WTC11 (cell line): ENCODE measurements at regions of chr5 and their contacts with region 1.

Region 1: DNA sequence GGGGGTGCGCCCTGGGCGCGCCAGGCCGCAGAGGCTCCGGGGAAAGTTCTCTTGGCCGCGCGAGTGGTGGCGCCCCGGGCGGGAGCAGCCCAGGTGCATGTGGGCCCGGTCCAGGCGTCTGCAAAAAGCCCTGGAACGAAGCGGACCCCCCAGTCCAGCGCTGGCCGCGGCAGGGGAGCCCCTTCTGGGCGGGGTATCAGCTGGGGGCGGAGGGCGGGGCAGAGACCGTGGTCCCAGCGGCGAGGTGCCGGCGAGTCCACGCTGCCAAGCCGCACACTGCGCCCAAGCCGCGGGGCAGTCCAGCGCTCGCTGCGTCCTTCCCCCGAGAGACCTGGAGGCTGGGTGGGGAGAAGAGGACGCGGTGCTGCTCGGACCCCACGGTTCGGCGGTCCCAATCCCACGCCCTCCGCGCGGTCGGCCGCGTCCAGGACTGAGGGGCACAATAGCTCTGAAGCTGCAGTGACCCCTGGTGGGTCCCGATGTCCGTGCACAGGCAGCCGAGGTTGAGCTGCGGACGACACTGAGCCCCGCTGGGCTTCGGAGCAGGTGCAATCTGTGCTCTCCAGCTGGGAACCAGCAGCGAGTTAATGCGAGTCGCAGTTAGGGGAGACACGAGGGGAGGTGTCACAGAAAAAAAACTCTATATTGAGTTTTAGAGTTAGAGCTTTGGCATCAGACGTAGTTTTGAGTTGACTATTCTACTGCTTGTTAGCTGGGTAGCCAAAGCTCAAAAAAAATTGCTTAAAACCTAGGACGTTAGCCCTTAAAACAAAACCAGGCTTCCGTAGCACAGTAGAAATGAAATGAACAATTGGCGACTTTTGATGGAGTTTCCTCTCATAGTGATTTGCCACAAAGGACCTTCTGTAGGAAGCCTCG is 1.1 kb upstream of the EPB41L4A start:
- DNase-seq: peak; percentile 90
- ATAC-seq: peak; percentile 85
- H3K4me3 Mint-ChIP-seq: peak overlapping the region; percentile 80
- H3K27ac Mint-ChIP-seq: no peak overlapping the region
- H3K4me1 Mint-ChIP-seq: peaks cover 21% of the 10 kb centered on the region
- H3K27me3 Mint-ChIP-seq: peaks cover 47% of the 10 kb centered on the region
- CTCF ChIP-seq: peak; percentile 77

Region 2: GRCh38 chr5:112160652-112161391 is 259.4 kb before region 1 on chr5:
- CTCF ChIA-PET with region 1: interaction called, 36 read pairs
- POLR2A ChIA-PET with region 1: interaction called, 11 read pairs
- DNase-seq: peak; percentile 88
- ATAC-seq: peak; percentile 86
- H3K4me3 Mint-ChIP-seq: peak overlapping the region; percentile 91
- H3K27ac Mint-ChIP-seq: peak overlapping the region; percentile 95
- H3K4me1 Mint-ChIP-seq: peaks cover 49% of the 10 kb centered on the region
- H3K27me3 Mint-ChIP-seq: no peaks in the 10 kb centered on the region; the same call in 1 of the 2 replicates
- CTCF ChIP-seq: peak; percentile 88

Region 3: DNA sequence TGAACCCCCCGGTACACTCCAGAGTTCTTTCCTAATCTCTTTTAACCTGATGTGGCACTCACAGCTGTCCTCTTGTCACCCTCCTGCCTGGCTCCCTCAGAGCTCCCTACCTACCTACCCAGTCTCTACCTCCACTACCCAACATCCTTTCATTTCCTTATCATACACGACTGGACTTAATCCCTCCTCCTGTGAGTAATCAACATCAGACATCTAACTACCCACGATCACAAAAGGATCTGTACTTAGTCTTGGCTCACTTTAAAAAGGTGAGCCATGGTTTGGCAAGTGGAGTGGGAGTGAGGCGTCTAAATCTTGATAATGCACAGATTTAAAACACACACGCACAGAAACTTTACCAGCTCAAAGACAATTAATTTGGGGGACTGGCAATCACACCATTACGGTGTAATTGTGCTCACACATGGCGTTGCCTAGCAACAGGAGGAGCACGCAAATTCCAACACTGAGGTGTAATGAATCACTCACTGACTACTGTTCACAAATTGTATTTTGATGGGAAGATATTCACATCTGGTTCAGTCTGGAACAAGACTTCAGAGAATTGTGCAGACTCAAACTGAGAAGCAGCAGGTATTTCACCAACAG is 237.0 kb before region 1 on chr5:
- CTCF ChIA-PET with region 1: interaction called, 10 read pairs
- POLR2A ChIA-PET with region 1: no interaction called
- DNase-seq: no peak
- ATAC-seq: peak; percentile 58
- H3K4me3 Mint-ChIP-seq: no peak overlapping the region
- H3K27ac Mint-ChIP-seq: no peak overlapping the region
- H3K4me1 Mint-ChIP-seq: peaks cover 12% of the 10 kb centered on the region
- H3K27me3 Mint-ChIP-seq: no peaks in the 10 kb centered on the region
- CTCF ChIP-seq: no peak

Region 4: DNA sequence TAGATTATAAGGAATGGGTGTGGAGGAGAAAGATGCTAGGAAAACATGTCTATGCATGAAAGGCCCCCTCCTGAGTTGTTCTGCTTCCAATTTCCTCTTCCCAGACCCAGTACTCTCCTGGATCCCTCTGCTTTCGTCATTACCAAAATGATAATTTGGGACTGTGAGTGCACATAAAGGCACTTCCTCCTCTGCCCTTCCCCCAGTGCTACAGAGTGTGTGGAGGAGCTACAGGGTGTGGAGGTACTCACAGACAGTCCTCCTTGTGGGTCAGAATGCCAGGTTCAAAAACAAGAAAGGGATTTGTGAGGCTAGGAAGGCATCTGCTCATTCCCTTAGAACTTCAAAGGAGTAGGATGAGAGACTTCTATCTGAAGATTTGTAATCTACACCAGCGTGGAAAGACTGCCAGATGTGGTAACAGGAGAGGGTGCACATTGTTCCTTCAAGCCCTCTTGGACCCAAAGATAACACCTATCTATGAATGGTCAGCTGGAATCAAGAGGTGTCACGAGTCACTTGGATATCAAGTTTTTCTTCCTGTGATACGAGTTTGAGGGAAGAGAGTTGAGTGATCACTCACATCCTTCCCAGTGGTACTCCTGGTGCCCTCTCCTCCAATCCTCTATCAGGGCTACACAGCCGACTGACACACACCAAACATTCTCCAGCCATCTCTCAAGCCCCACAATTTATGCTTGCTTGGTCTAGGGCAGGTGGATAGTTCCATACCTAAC is 202.2 kb before region 1 on chr5:
- CTCF ChIA-PET with region 1: interaction called, 34 read pairs
- POLR2A ChIA-PET with region 1: no interaction called
- DNase-seq: no peak
- ATAC-seq: no peak
- H3K4me3 Mint-ChIP-seq: no peak overlapping the region
- H3K27ac Mint-ChIP-seq: peak overlapping the region; percentile 81; the same call in 1 of the 2 replicates
- H3K4me1 Mint-ChIP-seq: peaks cover 17% of the 10 kb centered on the region
- H3K27me3 Mint-ChIP-seq: no peaks in the 10 kb centered on the region
- CTCF ChIP-seq: no peak

Region 5: DNA sequence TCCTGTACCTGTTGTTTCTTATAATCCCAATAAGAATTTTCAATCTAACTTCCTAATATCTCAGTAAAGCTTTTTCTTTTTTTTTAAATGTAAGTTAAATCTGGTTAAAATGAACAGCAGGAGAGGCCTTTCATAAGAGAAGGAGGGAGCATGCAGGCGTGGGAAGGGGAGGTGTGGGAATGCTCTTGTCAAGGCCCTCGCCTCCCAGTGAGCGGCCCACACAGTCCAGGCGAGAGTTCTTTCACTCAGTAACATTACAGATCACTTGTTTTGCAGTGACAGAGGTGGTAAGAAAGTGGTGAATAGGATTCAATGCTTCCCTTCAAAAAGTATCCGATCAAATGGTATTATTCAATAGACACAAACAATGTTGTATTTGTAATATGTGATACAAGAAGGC is 126.1 kb before region 1 on chr5:
- CTCF ChIA-PET with region 1: interaction called, 18 read pairs
- POLR2A ChIA-PET with region 1: no interaction called
- DNase-seq: no peak
- ATAC-seq: no peak
- H3K4me3 Mint-ChIP-seq: no peak overlapping the region
- H3K27ac Mint-ChIP-seq: no peak overlapping the region
- H3K4me1 Mint-ChIP-seq: no peaks in the 10 kb centered on the region
- H3K27me3 Mint-ChIP-seq: no peaks in the 10 kb centered on the region
- CTCF ChIP-seq: no peak

Region 6: GRCh38 chr5:112529525-112529924 is 109.3 kb after region 1 on chr5:
- CTCF ChIA-PET with region 1: interaction called, 17 read pairs
- POLR2A ChIA-PET with region 1: no interaction called
- DNase-seq: no peak
- ATAC-seq: peak; percentile 77
- H3K4me3 Mint-ChIP-seq: no peak overlapping the region
- H3K27ac Mint-ChIP-seq: no peak overlapping the region
- H3K4me1 Mint-ChIP-seq: peaks cover 32% of the 10 kb centered on the region
- H3K27me3 Mint-ChIP-seq: 0 out of 2 replicates have a peak, but pooled peaks cover 6% of the 10 kb centered on the region
- CTCF ChIP-seq: peak; percentile 13; the same call in 1 of the 2 replicates